BJ (cell line): ENCODE measurements at regions of chr20 and their contacts with region 1.

Region 1: GRCh38 chr20:17682103-17682888 is at the start of gene RRBP1:
- DNase-seq: peak; percentile 84
- H3K4me3 ChIP-seq: peak within 1 kb of the TSS; percentile 92
- H3K27me3 ChIP-seq: peaks cover 14% of the 10 kb centered on the region
- CTCF ChIP-seq: peak; percentile 86
- polyA plus RNA-seq, gene RRBP1: 87.1 and 98.7 TPM in 2 replicates

Region 2: GRCh38 chr20:17620736-17621429 is 61.4 kb before region 1 on chr20:
- CTCF ChIA-PET with region 1: no interaction called
- POLR2A ChIA-PET with region 1: no interaction called
- DNase-seq: no peak
- H3K4me3 ChIP-seq: no peak overlapping the region
- H3K27me3 ChIP-seq: no peaks in the 10 kb centered on the region
- CTCF ChIP-seq: no peak

Region 3: DNA sequence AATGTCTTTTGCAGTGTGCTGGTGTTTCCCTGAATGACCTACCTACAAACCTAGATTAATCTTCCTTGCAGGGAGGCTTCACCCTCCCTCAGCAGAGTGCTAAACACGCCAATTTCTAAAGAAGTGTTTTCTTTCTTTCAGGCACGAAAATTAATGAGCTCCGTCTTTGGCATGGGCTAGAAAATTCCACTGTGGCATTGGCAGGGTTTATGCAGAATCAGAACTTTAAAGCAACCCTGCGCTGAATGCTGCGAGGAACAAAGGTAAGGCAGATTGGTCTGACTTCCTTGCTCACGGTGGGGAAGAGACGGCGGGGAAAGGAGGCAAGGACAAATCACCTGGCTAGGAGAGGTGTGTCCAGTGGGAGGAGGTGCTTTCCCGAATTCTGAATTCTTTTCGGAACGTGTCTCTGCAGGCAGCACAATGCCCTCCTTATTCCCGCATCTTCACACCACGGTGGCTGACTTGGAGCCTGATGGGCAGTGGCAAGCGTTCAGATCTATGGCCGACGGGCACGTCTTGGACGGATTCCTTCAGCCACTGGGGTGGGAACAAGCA is 11.2 kb after region 1 on chr20:
- CTCF ChIA-PET with region 1: interaction called, 36 read pairs
- POLR2A ChIA-PET with region 1: interaction called, 3 read pairs
- DNase-seq: no peak
- H3K4me3 ChIP-seq: no peak overlapping the region
- H3K27me3 ChIP-seq: peaks cover 10% of the 10 kb centered on the region
- CTCF ChIP-seq: no peak

Region 4: GRCh38 chr20:17796091-17796563 is 113.8 kb after region 1 on chr20:
- CTCF ChIA-PET with region 1: interaction called, 13 read pairs
- POLR2A ChIA-PET with region 1: no interaction called
- DNase-seq: peak; percentile 36
- H3K4me3 ChIP-seq: no peak overlapping the region
- H3K27me3 ChIP-seq: peaks cover 1% of the 10 kb centered on the region
- CTCF ChIP-seq: no peak

Region 5: GRCh38 chr20:17843246-17844132 is 161.2 kb after region 1 on chr20:
- CTCF ChIA-PET with region 1: interaction called, 14 read pairs
- POLR2A ChIA-PET with region 1: no interaction called
- DNase-seq: peak; percentile 87
- H3K4me3 ChIP-seq: no peak overlapping the region
- H3K27me3 ChIP-seq: no peaks in the 10 kb centered on the region
- CTCF ChIP-seq: no peak

Region 6: DNA sequence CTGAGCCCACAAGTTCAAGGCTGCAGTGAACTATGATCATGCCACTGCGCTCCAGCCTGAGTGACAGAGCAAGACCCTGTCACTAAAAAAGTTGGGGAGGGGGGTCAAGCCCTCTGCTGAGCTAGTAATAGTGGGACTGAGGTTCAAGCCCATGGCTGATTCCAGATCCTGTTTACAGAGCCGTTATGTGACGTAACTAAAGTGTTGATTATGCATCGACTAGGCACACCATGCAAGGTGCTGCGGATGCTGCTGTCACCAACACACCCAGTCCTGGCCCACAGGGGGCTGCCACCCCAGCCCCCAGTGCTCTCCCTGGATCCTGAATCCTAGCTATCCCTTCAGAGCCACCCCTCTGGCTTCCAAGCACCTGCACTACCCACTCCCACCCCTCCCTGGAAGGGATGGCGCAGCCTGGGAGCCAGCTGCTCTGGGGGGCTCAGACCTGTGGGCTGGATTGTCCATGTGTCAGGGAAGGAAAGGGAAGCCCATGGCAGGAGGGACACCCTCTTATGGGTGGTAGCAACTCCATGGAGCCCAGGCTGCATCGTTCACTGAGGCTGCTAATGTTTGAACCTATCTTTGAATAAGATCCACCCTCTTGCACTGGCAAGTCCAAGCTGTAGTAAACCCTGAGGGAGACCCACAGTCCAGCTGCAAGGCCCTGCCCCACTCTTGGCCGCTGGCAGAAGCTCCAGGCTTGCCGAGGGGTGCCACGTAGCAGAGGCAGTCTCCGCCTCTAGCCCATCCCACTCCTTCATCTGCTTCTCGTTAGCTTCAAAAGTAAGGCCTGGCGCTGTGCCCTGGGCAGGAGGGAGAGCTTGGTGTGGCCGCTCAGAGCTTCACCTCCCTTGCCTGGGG is 191.3 kb after region 1 on chr20:
- CTCF ChIA-PET with region 1: interaction called, 13 read pairs
- POLR2A ChIA-PET with region 1: interaction called, 10 read pairs
- DNase-seq: peak; percentile 89
- H3K4me3 ChIP-seq: no peak overlapping the region
- H3K27me3 ChIP-seq: no peaks in the 10 kb centered on the region
- CTCF ChIP-seq: no peak

Region 7: GRCh38 chr20:17938871-17939619 is 256.7 kb after region 1 on chr20:
- CTCF ChIA-PET with region 1: interaction called, 39 read pairs
- POLR2A ChIA-PET with region 1: interaction called, 3 read pairs
- DNase-seq: no peak
- H3K4me3 ChIP-seq: no peak overlapping the region
- H3K27me3 ChIP-seq: no peaks in the 10 kb centered on the region
- CTCF ChIP-seq: peak; percentile 97